BJ (cell line): ENCODE measurements at regions of chr3 and their contacts with region 1.

Region 1: GRCh38 chr3:170144437-170144843 is 37.1 kb downstream of the PHC3 start:
- DNase-seq: no peak
- H3K4me3 ChIP-seq: no peak overlapping the region
- H3K27me3 ChIP-seq: no peaks in the 10 kb centered on the region
- CTCF ChIP-seq: no peak

Region 2: GRCh38 chr3:170117134-170117533 is 27.3 kb before region 1 on chr3:
- CTCF ChIA-PET with region 1: no interaction called
- POLR2A ChIA-PET with region 1: interaction called, 22 read pairs
- DNase-seq: no peak
- H3K4me3 ChIP-seq: no peak overlapping the region
- H3K27me3 ChIP-seq: no peaks in the 10 kb centered on the region
- CTCF ChIP-seq: peak; percentile 31; the same call in 1 of the 2 replicates

Region 3: GRCh38 chr3:170128977-170129431 is 15.4 kb before region 1 on chr3:
- CTCF ChIA-PET with region 1: no interaction called
- POLR2A ChIA-PET with region 1: no interaction called
- DNase-seq: no peak
- H3K4me3 ChIP-seq: no peak overlapping the region
- H3K27me3 ChIP-seq: no peaks in the 10 kb centered on the region
- CTCF ChIP-seq: no peak